ENCODE measurements at regions of chr2 and their contacts with region 1.

Region 1: DNA sequence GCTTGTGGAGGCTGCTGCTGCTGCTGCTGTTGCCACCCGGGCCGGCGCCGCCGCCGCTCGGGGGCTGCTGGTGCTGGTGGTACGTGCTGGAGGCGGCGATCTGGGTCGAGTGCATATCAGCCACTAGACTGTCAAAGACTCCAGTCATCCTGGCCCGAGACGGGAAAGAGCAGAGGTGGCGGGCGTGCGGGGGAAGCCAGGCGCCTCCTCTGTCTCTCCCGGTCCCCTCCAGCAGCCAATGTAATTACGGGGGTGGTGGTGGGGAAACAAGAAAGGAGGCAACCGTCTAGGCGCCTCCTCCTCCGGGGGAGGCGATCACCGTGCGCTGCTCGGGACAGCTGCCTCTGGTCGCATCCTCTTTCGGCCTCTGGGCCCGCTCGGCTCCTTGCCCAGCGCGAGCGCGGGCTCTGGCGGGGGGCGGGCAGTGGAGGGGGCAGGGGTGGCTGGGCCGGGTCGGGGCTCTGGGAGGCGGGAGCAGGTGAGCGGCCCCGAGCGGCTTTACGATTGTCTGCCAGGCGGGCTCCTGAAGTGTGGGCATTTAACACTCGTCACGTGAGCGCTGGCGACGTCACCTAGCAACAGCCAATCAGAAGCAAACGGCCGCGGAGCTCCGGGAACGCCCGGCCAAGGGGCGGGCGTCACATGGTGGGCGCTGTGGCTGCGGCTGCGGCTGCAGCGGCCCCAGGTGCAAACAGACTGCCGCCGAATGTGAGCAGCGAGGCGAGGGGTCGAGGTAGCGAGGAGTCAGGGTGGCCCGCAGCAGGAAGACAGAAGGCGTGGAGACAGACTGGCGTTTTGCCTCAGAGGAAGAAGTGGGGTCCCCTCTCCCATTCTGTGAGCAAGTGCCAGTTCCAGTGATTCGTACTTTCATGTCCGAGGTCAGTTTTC is at the start of gene DLX2:
- DNase-seq: peak; percentile 74 to 95
- H3K4me3 ChIP-seq: peak within 1 kb of the TSS; percentile 24
- CTCF ChIP-seq: no peak
- POLR2A ChIP-seq: no peak
- total RNA-seq, gene DLX2: 0.17 to 0.42 (median 0.19) TPM in 3 of 4 donors, not detected in the other

Region 2: GRCh38 chr2:171703574-171704347 is 398.9 kb before region 1 on chr2:
- intact Hi-C with region 1: loop called (anchors 10 kb)
- DNase-seq: no peak
- H3K4me3 ChIP-seq: no peak overlapping the region
- CTCF ChIP-seq: no peak
- POLR2A ChIP-seq: no peak

Region 3: GRCh38 chr2:171811245-171811628 is 291.4 kb before region 1 on chr2:
- intact Hi-C with region 1: loop called (anchors 5 kb)
- DNase-seq: no peak
- H3K4me3 ChIP-seq: no peak overlapping the region
- CTCF ChIP-seq: no peak
- POLR2A ChIP-seq: no peak

Measured in lower leg skin (tissue), 4 donors.